CD4-positive, alpha-beta memory T cell (primary cell): ENCODE measurements at regions of chr2 and their contacts with region 1.

Region 1: GRCh38 chr2:171433763-171434670 is at the starts of genes DCAF17 and METTL8:
- DNase-seq: peak; percentile 92 to 95 (median 94)
- H3K4me3 ChIP-seq: peak within 1 kb of the TSS; percentile 40 to 82
- H3K4me3 Mint-ChIP-seq: peak within 1 kb of the TSS; percentile 84 to 92 (median 90)
- H3K27ac ChIP-seq: peak within 1 kb of the TSS; percentile 91
- H3K27ac Mint-ChIP-seq: peak within 1 kb of the TSS; percentile 79 to 98 (median 96)
- H3K4me1 ChIP-seq: peaks cover 30% of the 10 kb centered on the region
- H3K4me1 Mint-ChIP-seq: peaks cover 32 to 52% (median 40%) of the 10 kb centered on the region in 4 donors
- H3K27me3 ChIP-seq: no peaks in the 10 kb centered on the region
- H3K27me3 Mint-ChIP-seq: no peaks in the 10 kb centered on the region
- total RNA-seq, gene DCAF17: 26.6 to 30.3 TPM
- total RNA-seq, gene METTL8: 17.5 to 19.2 TPM

Region 2: GRCh38 chr2:170973492-170974303 is 460.3 kb before region 1 on chr2:
- CTCF ChIA-PET with region 1: interaction called, 3 read pairs
- POLR2A ChIA-PET with region 1: interaction called, 4 read pairs
- intact Hi-C with region 1: loop called (anchors 1 kb)
- DNase-seq: peak; percentile 87 to 91 (median 87)
- H3K4me3 ChIP-seq: peak overlapping the region; percentile 26 to 77
- H3K4me3 Mint-ChIP-seq: peak overlapping the region; percentile 81 to 88 (median 84)
- H3K27ac ChIP-seq: peak overlapping the region; percentile 52
- H3K27ac Mint-ChIP-seq: peak overlapping the region; percentile 25 to 90 (median 54)
- H3K4me1 ChIP-seq: peaks cover 14% of the 10 kb centered on the region
- H3K4me1 Mint-ChIP-seq: peaks cover 7 to 16% (median 10%) of the 10 kb centered on the region in 4 donors
- H3K27me3 ChIP-seq: no peaks in the 10 kb centered on the region
- H3K27me3 Mint-ChIP-seq: no peaks in the 10 kb centered on the region

Region 3: GRCh38 chr2:171687287-171688128 is 253.5 kb after region 1 on chr2 and contains the start of gene DYNC1I2:
- CTCF ChIA-PET with region 1: no interaction called
- POLR2A ChIA-PET with region 1: no interaction called
- intact Hi-C with region 1: loop called (anchors 5 kb)
- DNase-seq: peak; percentile 72 to 83 (median 79)
- H3K4me3 ChIP-seq: peak within 1 kb of the TSS; percentile 52 to 75
- H3K4me3 Mint-ChIP-seq: peak within 1 kb of the TSS; percentile 90 to 97 (median 94)
- H3K27ac ChIP-seq: peak within 1 kb of the TSS; percentile 50
- H3K27ac Mint-ChIP-seq: peak within 1 kb of the TSS; percentile 86 to 97 (median 94)
- H3K4me1 ChIP-seq: peaks cover 13% of the 10 kb centered on the region
- H3K4me1 Mint-ChIP-seq: peaks cover 20 to 31% (median 27%) of the 10 kb centered on the region in 4 donors
- H3K27me3 ChIP-seq: no peaks in the 10 kb centered on the region
- H3K27me3 Mint-ChIP-seq: no peaks in the 10 kb centered on the region
- total RNA-seq, gene DYNC1I2: 50.2 to 50.3 TPM